Vagina (tissue), 2 donors: ENCODE measurements at regions of chr10 and their contacts with region 1.

Region 1: GRCh38 chr10:71319042-71319799 is at the start of gene SLC29A3:
- DNase-seq: no peak
- H3K4me3 ChIP-seq: peak within 1 kb of the TSS; percentile 60 to 88
- H3K27ac ChIP-seq: peak within 1 kb of the TSS; percentile 75
- H3K4me1 ChIP-seq: peaks cover 20% of the 10 kb centered on the region
- H3K27me3 ChIP-seq: no peaks in the 10 kb centered on the region
- CTCF ChIP-seq: peak; percentile 29 to 62 (median 60)
- POLR2A ChIP-seq: peak in 1 of 2 donors; percentile 37
- total RNA-seq, gene SLC29A3: 7.6 TPM

Region 2: GRCh38 chr10:71343392-71343773 is 24.2 kb after region 1 on chr10:
- intact Hi-C with region 1: no loop called
- DNase-seq: no peak
- H3K4me3 ChIP-seq: no peak overlapping the region
- H3K27ac ChIP-seq: no peak overlapping the region
- H3K4me1 ChIP-seq: no peaks in the 10 kb centered on the region
- H3K27me3 ChIP-seq: no peaks in the 10 kb centered on the region
- CTCF ChIP-seq: no peak
- POLR2A ChIP-seq: no peak

Region 3: DNA sequence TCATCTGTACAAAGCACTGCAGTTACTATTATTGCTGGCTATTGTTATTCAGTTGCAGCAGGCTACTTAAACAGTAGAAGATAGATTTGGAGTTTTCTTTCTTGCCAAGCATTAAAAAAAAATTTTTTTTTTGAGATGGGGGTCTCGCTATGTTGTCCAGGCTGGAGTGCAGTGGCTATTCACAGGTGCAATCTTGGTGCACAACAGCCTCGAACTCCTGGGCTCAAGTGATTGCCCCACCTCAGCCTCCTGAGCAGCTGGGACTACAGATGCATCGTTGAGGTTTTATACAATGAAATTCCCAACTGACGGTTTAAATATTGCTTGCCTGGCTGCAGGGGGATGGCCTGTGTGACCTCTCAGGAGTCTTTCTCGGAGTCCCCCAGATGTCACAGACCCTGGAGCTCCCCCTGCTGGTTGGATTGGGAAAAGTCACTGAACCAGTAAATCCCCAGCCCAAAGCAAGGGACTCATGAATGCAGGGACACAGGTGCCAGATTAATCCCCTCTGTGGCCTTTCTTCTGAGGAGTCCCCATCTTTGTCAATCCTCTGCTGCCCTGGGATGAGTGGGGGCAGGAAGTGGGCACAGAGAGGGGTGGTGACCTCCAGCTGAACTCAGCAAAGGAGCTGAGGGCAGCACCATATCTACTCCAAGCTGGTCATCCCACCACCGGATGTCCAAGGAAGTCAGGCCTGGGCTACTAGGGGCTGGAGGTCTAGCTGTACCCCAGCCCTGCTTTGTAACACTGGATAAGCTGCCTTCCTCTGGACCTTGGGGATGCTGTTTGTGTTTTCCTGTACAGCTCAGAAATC is 250.8 kb after region 1 on chr10:
- intact Hi-C with region 1: loop called (anchors 10 kb)
- DNase-seq: no peak
- H3K4me3 ChIP-seq: no peak overlapping the region
- H3K27ac ChIP-seq: no peak overlapping the region
- H3K4me1 ChIP-seq: no peaks in the 10 kb centered on the region
- H3K27me3 ChIP-seq: no peaks in the 10 kb centered on the region
- CTCF ChIP-seq: peak; percentile 88 to 89 (median 89)
- POLR2A ChIP-seq: no peak